ENCODE measurements at regions of chr3 and their contacts with region 1.

Region 1: DNA sequence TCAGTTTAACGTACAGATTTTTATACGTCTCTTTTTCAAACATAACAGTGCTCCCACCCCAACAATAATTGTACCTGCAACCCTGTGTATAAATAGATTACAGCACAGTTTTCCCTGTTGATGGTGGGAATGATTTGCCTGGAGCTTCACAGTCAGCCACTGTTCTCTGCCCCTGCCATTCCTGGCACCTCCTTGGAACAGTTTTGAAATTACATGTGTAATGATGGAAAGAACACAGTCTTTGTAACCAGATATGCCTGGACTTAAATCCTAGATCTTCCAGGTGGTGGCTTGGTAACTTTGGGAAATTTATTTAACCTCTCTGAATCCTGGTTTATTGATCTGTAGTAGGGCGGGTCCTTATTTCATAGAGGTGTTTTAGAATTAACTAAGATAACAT is 27.0 kb downstream of the CRYBG3 start:
- DNase-seq: no peak
- ATAC-seq: no peak
- H3K4me3 ChIP-seq: no peak overlapping the region
- H3K27ac ChIP-seq: no peak overlapping the region
- H3K4me1 ChIP-seq: peaks cover 0 to 12% (median 0%) of the 10 kb centered on the region in 9 donors
- H3K27me3 ChIP-seq: no peaks in the 10 kb centered on the region
- CTCF ChIP-seq: no peak

Region 2: DNA sequence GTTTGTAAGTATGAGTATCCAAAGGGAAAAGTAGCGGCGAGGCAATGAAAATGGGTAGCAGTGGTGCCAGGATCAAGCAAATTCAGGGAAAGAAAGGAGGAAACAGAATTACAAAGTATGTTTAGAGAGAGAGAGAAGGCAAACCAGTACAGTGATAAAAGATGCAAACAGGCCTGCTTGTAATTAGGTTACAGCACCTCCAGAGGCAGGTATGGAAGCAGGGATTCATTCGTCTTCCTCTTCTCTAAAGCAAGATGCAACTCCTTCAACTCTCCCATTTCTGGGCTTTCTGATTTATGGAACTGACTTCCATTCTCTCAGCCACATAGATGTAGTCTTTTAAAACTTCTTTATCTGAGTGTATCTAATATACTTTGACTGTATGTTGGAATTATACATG is 41.0 kb after region 1 on chr3:
- intact Hi-C with region 1: loop called in 1 of 10 experiments (anchors 5 kb)
- DNase-seq: no peak
- ATAC-seq: no peak
- H3K4me3 ChIP-seq: no peak overlapping the region
- H3K27ac ChIP-seq: no peak overlapping the region
- H3K4me1 ChIP-seq: peaks cover 0 to 24% (median 18%) of the 10 kb centered on the region in 9 donors
- H3K27me3 ChIP-seq: no peaks in the 10 kb centered on the region
- CTCF ChIP-seq: no peak

Region 3: DNA sequence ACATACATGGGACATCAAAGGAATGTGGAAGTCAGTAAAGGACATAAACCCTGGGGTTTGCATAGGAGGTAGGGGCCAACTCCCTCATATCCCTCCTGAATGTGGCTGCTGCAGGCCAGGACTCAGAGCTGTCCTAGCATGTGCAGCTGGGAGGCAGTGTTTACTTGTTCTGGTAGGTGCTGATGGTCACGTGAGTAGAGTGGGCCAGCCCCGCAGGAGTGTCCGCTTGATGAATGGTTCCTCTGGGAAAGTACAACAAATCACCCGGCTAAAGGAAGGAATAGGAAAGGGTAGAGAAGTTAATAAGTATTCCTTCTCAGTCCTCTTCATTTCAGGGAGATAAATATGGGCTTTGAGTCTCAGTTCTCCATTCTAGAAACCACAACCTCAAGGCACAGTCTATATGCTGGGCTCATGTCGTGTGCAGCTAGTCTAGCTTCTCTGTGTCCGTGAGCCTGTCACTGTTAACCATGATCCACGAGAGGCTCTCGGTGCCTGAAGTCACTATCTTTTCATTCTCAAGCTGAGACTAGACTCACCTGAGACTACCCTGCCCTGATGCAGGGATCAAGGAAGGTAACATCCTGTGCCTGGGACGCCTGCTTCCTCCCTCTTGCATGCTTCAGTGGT is 105.6 kb after region 1 on chr3:
- intact Hi-C with region 1: no loop called
- DNase-seq: no peak
- ATAC-seq: no peak
- H3K4me3 ChIP-seq: no peak overlapping the region
- H3K27ac ChIP-seq: no peak overlapping the region
- H3K4me1 ChIP-seq: peaks cover 0 to 26% (median 3%) of the 10 kb centered on the region in 9 donors
- H3K27me3 ChIP-seq: no peaks in the 10 kb centered on the region
- CTCF ChIP-seq: no peak

Measured in heart right ventricle (tissue), 16 donors.